ENCODE measurements at regions of chr17 and their contacts with region 1.

Region 1: GRCh38 chr17:44636562-44636961 is 19.7 kb upstream of the MEIOC start:
- DNase-seq: no peak
- ATAC-seq: no peak
- H3K4me3 ChIP-seq: no peak overlapping the region
- H3K27ac ChIP-seq: no peak overlapping the region
- H3K4me1 ChIP-seq: no peaks in the 10 kb centered on the region
- H3K27me3 ChIP-seq: no peaks in the 10 kb centered on the region
- CTCF ChIP-seq: peak in 6 of 7 experiments; percentile 8 to 52 (median 35)
- POLR2A ChIP-seq: no peak

Region 2: GRCh38 chr17:44533533-44534246 is 102.9 kb before region 1 on chr17:
- intact Hi-C with region 1: loop called (anchors 10 kb)
- DNase-seq: peak; percentile 83 to 90 (median 86)
- ATAC-seq: peak; percentile 85
- H3K4me3 ChIP-seq: no peak overlapping the region
- H3K27ac ChIP-seq: no peak overlapping the region
- H3K4me1 ChIP-seq: no peaks in the 10 kb centered on the region
- H3K27me3 ChIP-seq: no peaks in the 10 kb centered on the region
- CTCF ChIP-seq: peak; percentile 80 to 90 (median 88)
- POLR2A ChIP-seq: no peak

Region 3: DNA sequence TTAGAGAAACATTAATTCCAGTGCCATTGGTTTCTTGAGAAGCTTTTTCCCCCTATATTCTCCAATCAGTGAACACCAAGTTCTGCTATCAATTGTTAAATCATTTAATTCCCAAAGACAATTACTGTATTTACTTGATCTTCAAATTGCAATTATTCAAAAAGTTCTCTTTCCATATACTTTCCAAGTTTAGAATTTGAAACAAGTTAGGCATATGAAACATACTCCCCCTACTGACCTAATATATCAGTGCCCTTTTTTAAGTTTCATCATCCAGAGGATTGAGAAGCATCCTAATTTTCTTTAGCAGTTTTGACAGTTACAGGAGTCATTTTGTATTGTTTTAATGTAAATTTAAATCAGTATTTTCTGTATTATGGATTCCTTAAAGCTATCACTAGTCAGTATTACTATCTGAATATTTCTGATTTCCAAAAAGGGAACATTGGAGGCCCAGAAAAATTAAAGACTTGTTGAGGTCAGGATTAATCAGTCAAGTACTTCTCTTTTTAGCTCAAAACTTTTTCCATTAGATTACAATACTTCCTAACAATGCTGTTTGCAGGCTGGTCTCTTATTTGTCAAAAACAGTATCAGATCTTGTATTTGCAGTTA is 36.0 kb after region 1 on chr17:
- intact Hi-C with region 1: no loop called
- DNase-seq: no peak
- ATAC-seq: no peak
- H3K4me3 ChIP-seq: no peak overlapping the region
- H3K27ac ChIP-seq: no peak overlapping the region
- H3K4me1 ChIP-seq: no peaks in the 10 kb centered on the region
- H3K27me3 ChIP-seq: no peaks in the 10 kb centered on the region
- CTCF ChIP-seq: peak in 6 of 7 experiments; percentile 32 to 49 (median 40)
- POLR2A ChIP-seq: no peak

Region 4: DNA sequence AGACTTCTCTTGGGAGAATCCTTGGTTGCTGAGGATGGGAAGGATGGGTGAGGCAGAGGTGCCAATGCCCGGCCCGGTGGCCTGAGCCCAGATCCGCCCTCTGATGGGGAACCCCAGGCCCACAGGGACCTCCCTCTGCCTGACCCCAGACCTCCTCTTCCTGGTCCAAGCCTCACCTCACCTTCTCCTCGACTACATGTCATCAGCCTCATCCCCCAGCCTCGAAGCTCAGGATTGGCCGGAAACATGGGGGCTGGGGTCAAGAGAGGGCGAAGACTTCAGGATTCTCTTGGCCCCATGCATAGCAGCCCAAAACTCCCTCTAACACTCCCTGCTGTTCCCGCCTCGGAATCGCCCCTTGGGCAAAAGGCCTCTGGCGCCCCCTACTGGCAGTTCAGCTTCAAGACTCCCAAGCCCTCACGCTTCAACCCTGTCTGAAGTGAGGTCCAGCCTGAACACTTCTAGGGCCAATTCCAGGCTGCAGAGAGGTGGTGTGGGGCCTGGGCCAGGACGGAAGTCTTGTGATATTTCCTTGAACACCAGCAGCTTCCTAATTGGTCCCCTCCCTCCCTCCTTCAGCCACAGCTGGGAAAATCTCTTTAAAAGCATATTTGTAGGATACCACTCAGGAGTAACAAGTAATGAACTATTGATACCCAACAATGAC is 748.9 kb after region 1 on chr17:
- intact Hi-C with region 1: no loop called
- DNase-seq: peak; percentile 88 to 92 (median 90)
- ATAC-seq: peak; percentile 89
- H3K4me3 ChIP-seq: no peak overlapping the region
- H3K27ac ChIP-seq: peak overlapping the region in 3 of 4 donors; percentile 25 to 50 (median 46)
- H3K4me1 ChIP-seq: peaks cover 28% of the 10 kb centered on the region
- H3K27me3 ChIP-seq: no peaks in the 10 kb centered on the region
- CTCF ChIP-seq: peak; percentile 95 to 98 (median 98)
- POLR2A ChIP-seq: no peak